Activated naive CD4-positive, alpha-beta T cell treated with anti-CD3 and anti-CD28 coated beads for 36 hours (primary cell): ENCODE measurements at regions of chr16 and their contacts with region 1.

Region 1: GRCh38 chr16:53664724-53665345 is 38.8 kb downstream of the RPGRIP1L start:
- DNase-seq: peak; percentile 38
- H3K4me3 Mint-ChIP-seq: no peak overlapping the region
- H3K27ac Mint-ChIP-seq: no peak overlapping the region
- H3K4me1 Mint-ChIP-seq: peaks cover 11% of the 10 kb centered on the region
- H3K27me3 Mint-ChIP-seq: no peaks in the 10 kb centered on the region

Region 2: GRCh38 chr16:53809088-53809932 is 144.5 kb after region 1 on chr16:
- CTCF ChIA-PET with region 1: no interaction called
- intact Hi-C with region 1: loop called (anchors 10 kb)
- DNase-seq: no peak
- H3K4me3 Mint-ChIP-seq: no peak overlapping the region
- H3K27ac Mint-ChIP-seq: no peak overlapping the region
- H3K4me1 Mint-ChIP-seq: peaks cover 23% of the 10 kb centered on the region
- H3K27me3 Mint-ChIP-seq: no peaks in the 10 kb centered on the region